Activated B cell treated with CpG ODN at 0.5 μM for 24 hours (primary cell): ENCODE measurements at regions of chr22 and their contacts with region 1.

Region 1: DNA sequence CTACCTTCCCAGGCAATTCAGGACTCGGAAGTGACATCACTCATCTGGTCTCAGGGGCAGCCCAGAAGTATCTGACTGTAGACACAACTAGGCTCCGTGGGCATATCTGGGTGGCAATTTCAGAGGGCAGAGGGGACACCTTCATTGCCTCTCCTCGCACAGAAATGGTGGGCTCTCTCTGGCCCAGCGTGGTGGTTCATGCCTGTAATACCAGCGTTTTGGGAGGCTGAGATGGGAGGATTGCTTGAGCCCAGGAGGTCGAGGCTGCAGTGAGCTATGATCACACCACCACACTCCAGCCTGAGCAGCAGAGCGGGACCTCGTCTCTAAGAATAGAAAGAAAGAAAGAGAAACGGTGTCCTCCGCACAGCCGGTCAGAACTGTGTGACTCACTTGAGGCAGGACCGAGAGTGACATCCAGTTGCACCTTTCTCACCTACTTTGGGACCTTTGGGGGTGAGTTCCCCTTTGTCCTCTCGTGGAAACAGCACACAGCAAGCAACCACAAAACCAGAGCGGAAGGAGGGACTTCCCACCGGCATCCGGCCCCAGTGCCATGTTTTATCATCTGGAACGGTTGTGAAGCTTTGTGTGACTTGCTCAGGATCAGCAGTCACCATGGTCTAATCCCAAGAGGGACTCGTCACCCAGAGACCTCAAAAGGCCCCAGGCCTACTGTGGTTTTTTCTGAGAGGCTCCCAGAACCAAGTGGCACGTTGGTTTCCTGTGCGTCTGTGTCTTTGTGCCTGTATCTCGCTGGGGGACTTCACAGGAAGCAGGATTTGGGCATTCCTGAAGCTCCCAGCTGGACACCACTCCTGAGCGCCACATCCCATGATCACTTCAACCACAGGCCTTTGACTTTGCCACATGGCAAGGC is 38.4 kb upstream of the EMID1 start:
- DNase-seq: peak; percentile 69
- ATAC-seq: peak; percentile 94
- H3K4me3 Mint-ChIP-seq: peak overlapping the region; percentile 73
- H3K27ac Mint-ChIP-seq: peak overlapping the region; percentile 87
- H3K4me1 Mint-ChIP-seq: peaks cover 35% of the 10 kb centered on the region
- H3K27me3 Mint-ChIP-seq: peaks cover 41% of the 10 kb centered on the region
- CTCF ChIP-seq: no peak

Region 2: DNA sequence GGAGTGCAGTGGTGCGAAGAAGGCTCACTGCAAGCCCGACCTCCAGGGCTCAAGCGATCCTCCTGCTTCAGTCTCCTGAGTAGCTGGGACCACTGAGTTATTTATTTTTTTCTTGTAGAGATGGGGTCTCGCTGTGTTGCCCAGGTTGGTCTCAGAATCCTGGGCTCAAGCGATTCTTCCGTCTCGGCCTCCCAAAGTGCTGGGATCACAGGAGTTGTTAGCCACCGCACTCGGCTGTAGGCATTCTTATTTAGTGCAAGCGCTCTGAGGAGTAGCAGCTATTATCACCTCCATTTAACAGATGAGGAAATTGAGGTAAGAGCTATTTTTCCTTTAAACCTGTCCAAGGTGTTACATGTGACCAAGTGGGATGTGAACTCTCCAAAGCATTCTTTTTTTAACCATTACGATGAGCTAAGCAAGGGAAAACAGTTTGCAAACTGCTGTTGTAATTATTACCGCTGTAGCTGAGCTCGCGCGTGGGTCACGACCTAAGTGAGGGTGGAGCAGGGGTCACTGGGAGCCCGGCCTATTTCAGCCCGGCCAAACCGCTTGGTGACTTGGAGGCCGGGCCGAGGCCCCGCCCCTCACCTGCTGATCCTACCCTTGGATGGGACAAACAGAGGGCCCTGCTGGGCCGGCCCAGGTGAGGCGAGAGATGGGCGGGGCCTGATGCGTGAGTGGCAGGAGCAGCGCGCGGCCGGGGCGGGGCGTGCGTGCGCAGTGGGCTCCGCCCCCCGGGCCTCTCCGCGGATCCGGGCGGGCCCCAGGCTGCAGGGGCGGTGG is 94.9 kb before region 1 on chr22:
- CTCF ChIA-PET with region 1: no interaction called
- POLR2A ChIA-PET with region 1: no interaction called
- intact Hi-C with region 1: loop called (anchors 5 kb)
- DNase-seq: peak; percentile 76
- ATAC-seq: peak; percentile 99
- H3K4me3 Mint-ChIP-seq: peak overlapping the region; percentile 72
- H3K27ac Mint-ChIP-seq: no peak overlapping the region
- H3K4me1 Mint-ChIP-seq: peaks cover 25% of the 10 kb centered on the region
- H3K27me3 Mint-ChIP-seq: peaks cover 59% of the 10 kb centered on the region
- CTCF ChIP-seq: no peak

Region 3: GRCh38 chr22:29154364-29155048 is 12.8 kb before region 1 on chr22:
- CTCF ChIA-PET with region 1: no interaction called
- POLR2A ChIA-PET with region 1: no interaction called
- intact Hi-C with region 1: loop called (anchors 2 kb)
- DNase-seq: peak; percentile 37
- ATAC-seq: peak; percentile 40
- H3K4me3 Mint-ChIP-seq: no peak overlapping the region
- H3K27ac Mint-ChIP-seq: no peak overlapping the region
- H3K4me1 Mint-ChIP-seq: peaks cover 6% of the 10 kb centered on the region
- H3K27me3 Mint-ChIP-seq: peaks cover 58% of the 10 kb centered on the region
- CTCF ChIP-seq: no peak

Region 4: DNA sequence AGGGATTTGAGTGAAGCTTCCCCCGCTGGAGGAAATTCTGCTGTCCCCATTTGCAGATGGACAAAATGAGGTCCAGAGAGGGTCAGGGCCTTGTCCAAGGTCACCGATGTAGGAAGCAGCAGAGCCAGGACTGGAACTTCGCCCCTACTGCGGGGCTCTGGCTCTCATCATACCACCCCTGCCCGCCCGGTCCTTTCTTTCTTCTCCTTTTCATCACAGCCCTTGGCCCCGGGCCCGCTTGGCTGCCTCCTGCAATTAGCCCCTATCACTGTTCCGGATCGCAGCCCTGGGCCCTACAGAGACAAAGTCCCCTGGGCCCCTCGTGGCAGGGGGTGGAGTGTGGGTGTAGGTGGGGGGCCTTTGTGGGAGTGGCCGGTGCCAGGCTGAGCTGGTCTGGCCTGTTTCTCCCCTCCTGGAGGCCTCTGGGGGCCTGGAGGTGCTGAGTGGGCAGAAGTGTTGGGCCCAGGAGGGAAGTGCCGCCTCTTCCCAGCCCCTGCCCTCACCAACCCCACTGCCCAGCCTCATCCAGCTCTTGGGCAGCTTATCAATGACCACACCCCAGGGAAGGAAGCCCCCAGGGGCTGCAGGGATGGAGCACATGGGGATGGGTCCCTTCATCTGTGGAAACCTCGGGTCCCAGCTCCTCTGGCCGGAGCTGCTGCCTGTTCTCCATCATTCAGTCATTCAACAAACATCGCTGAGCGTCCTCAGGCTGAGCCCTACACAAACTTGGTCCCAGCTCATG is 41.8 kb after region 1 on chr22:
- CTCF ChIA-PET with region 1: interaction called, 4 read pairs
- POLR2A ChIA-PET with region 1: no interaction called
- intact Hi-C with region 1: loop called (anchors 1 kb)
- DNase-seq: peak; percentile 34
- ATAC-seq: peak; percentile 83
- H3K4me3 Mint-ChIP-seq: no peak overlapping the region
- H3K27ac Mint-ChIP-seq: no peak overlapping the region
- H3K4me1 Mint-ChIP-seq: peaks cover 15% of the 10 kb centered on the region
- H3K27me3 Mint-ChIP-seq: peaks cover 53% of the 10 kb centered on the region
- CTCF ChIP-seq: no peak

Region 5: DNA sequence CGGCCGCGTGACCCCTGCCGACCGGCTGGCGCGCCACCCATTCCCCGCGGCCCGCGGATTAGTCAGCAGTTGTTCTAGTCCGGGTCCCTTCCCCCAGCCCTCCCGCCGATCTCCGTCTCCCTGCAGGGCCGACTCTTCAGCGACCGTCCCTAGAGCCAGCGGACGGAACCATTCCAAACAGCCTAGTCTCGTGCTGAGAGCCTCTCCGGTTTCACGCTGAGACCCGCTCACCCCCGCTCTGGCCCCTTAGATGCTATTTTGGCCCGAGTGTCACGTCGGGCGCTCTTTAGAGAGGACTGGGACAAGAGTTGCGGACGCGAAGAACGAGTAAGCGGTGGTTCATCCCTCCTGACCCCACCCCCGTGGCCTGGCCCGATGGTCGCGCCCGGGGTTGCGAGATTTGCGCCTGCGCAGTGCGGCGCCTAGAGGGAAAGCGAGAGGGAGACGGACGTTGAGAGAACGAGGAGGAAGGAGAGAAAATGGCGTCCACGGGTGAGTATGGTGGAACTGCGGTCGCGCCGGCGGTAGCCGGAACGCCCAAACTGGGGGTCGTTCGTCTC is 100.7 kb after region 1 on chr22 and contains the starts of genes EWSR1 and RHBDD3:
- CTCF ChIA-PET with region 1: no interaction called
- POLR2A ChIA-PET with region 1: no interaction called
- intact Hi-C with region 1: loop called (anchors 1 kb)
- DNase-seq: peak; percentile 99
- ATAC-seq: peak; percentile 86
- H3K4me3 Mint-ChIP-seq: peak within 1 kb of the TSS; percentile 96
- H3K27ac Mint-ChIP-seq: peak within 1 kb of the TSS; percentile 100
- H3K4me1 Mint-ChIP-seq: peaks cover 58% of the 10 kb centered on the region
- H3K27me3 Mint-ChIP-seq: no peaks in the 10 kb centered on the region
- CTCF ChIP-seq: no peak
- total RNA-seq, gene EWSR1: 347 and 382 TPM in 2 replicates
- total RNA-seq, gene RHBDD3: 17.7 and 17.9 TPM in 2 replicates

Region 6: DNA sequence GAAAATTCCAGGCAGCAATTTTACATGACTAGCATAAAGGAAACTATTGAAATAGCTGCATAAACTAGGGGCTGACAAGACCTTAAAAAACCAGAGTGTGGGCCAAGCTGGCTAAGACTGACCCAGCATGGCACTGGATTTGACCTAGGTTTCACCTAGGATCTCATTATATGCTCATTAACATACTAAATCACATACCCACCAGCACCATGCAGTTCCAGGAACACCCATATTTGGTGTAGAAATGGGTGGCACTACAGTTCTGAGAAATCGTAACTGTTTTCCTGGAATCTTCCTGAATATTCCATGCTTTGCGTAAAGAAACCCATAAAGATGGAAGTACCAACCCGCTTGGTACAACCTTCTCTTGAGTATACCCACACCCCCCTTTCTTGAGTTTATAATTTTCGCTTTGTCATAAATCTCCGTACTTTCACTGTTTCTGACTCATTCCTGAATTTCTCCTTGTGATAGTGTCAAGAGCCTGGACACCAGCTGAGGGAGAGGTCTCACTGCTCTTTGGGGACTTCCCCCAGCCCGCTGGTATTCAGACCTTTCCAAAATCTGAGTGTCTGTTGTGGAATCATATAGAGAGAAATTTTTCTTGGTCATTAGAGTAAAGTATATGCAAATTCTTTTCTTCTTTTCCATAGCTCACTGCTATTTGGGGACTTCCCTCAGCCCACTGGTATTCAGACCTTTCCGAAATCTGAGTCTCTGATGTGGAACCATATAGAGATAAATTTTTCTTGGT is 770.8 kb after region 1 on chr22:
- CTCF ChIA-PET with region 1: no interaction called
- POLR2A ChIA-PET with region 1: no interaction called
- intact Hi-C with region 1: loop called (anchors 5 kb)
- DNase-seq: no peak
- ATAC-seq: peak; percentile 88
- H3K4me3 Mint-ChIP-seq: peak overlapping the region; percentile 80
- H3K27ac Mint-ChIP-seq: peak overlapping the region; percentile 87
- H3K4me1 Mint-ChIP-seq: peaks cover 45% of the 10 kb centered on the region
- H3K27me3 Mint-ChIP-seq: no peaks in the 10 kb centered on the region
- CTCF ChIP-seq: no peak